Calu3 (cell line): ENCODE measurements at regions of chr13 and their contacts with region 1.

Region 1: DNA sequence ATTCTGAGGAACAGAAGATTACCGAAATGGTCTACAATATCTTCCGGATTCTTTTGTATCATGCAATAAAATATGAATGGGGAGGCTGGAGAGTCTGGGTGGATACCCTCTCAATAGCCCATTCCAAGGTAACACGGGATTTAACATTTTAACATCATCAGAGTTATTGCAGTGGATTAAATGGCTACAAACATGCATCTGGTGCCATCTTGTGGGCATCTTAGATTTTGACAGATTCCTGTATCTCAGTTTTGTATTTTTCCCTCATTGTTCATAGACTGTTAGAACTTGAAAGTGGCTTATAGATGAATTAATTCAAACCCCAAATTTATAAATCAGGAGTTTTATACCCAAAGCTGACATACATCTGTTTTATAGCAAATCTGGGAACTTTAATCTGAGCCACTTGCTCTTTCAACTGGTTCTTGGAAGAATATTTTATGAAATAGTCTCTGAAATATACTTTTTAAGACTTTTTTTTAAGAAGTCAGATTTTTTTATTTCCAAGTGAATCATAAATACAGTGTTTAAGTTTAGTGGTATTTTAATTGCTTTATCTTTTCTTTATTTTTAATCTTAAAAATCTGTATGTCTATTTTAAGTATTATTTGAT is 215.2 kb downstream of the NBEA start:
- DNase-seq: peak; percentile 30
- H3K4me3 Mint-ChIP-seq: peak overlapping the region; percentile 60
- H3K27ac Mint-ChIP-seq: peak overlapping the region; percentile 87
- H3K4me1 Mint-ChIP-seq: peaks cover 14% of the 10 kb centered on the region
- H3K27me3 Mint-ChIP-seq: no peaks in the 10 kb centered on the region
- CTCF ChIP-seq: peak; percentile 29

Region 2: DNA sequence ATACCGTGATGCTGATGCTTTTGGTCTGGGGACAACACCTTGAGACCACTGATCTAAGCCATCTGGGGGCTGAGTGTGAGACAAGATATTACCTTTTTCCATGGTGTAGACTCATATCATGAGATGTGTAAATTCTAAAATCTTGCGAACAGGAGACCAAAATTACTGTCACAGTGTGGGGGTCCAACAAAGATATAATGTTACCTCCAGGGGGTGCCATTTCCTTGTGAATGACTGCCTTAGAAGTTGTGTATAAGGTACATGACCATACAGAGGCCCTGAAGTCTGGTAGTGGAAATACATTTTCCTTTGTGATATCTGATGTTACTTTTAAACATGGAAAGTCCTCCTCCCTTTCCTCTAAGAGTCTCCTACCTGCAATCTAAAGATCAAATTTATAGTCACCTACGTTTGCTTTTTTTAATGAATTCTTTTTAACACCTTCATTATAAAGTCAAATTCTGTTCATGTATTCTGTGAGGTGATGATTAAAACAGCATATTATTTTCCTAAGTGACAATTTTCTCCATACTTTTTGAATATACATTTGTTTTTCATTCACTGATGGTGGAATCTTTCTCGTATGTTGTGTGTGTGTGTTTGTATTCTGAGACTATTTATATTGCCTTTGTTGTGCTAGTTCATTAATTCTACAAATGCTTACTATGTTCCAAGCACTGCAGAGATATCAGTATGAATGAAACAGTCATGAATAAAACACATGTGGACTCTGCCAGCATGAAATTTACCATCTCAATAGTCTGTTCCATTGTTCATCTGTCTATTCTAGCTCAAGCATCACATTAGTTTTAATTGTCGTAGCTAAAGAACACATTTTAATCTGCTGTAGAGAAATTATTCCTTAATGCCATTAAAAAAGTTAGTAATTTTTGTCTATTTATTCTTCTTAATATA is 1225.6 kb before region 1 on chr13:
- CTCF ChIA-PET with region 1: no interaction called
- intact Hi-C with region 1: loop called (anchors 2 kb)
- DNase-seq: peak; percentile 44
- H3K4me3 Mint-ChIP-seq: no peak overlapping the region
- H3K27ac Mint-ChIP-seq: no peak overlapping the region
- H3K4me1 Mint-ChIP-seq: peaks cover 8% of the 10 kb centered on the region
- H3K27me3 Mint-ChIP-seq: no peaks in the 10 kb centered on the region
- CTCF ChIP-seq: peak; percentile 33

Region 3: GRCh38 chr13:34167347-34167746 is 989.9 kb before region 1 on chr13:
- CTCF ChIA-PET with region 1: no interaction called
- intact Hi-C with region 1: loop called (anchors 5 kb)
- DNase-seq: no peak
- H3K4me3 Mint-ChIP-seq: no peak overlapping the region
- H3K27ac Mint-ChIP-seq: peak overlapping the region; percentile 45
- H3K4me1 Mint-ChIP-seq: peaks cover 51% of the 10 kb centered on the region
- H3K27me3 Mint-ChIP-seq: no peaks in the 10 kb centered on the region
- CTCF ChIP-seq: no peak

Region 4: GRCh38 chr13:34349091-34349722 is 808.0 kb before region 1 on chr13:
- CTCF ChIA-PET with region 1: no interaction called
- intact Hi-C with region 1: loop called (anchors 5 kb)
- DNase-seq: peak; percentile 22
- H3K4me3 Mint-ChIP-seq: no peak overlapping the region
- H3K27ac Mint-ChIP-seq: no peak overlapping the region
- H3K4me1 Mint-ChIP-seq: peaks cover 41% of the 10 kb centered on the region
- H3K27me3 Mint-ChIP-seq: no peaks in the 10 kb centered on the region
- CTCF ChIP-seq: no peak

Region 5: DNA sequence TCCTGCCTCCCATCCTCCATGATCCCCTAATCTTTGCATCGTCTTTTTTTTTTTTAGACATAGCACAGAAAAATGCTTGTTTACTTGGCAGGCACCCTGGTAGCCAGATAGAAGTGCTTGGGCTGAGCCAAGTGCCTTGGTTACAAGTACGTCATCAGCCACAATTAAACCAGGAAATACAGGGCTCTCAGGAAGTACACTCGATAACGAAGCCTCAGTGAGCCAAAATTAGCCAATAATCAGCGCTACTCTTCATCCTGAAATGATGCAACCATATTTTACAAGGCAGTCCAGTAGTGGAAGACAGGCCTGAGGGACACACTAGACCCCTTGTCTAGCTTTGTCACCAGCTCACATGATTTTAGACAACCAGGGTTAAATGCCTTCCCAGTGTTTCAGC is 409.2 kb before region 1 on chr13:
- CTCF ChIA-PET with region 1: no interaction called
- intact Hi-C with region 1: loop called (anchors 10 kb)
- DNase-seq: peak; percentile 52
- H3K4me3 Mint-ChIP-seq: no peak overlapping the region
- H3K27ac Mint-ChIP-seq: peak overlapping the region; percentile 94
- H3K4me1 Mint-ChIP-seq: no peaks in the 10 kb centered on the region
- H3K27me3 Mint-ChIP-seq: no peaks in the 10 kb centered on the region
- CTCF ChIP-seq: no peak

Region 6: GRCh38 chr13:34941835-34942731 is 215.2 kb before region 1 on chr13 and contains the start of gene NBEA:
- CTCF ChIA-PET with region 1: no interaction called
- intact Hi-C with region 1: loop called (anchors 2 kb)
- DNase-seq: peak; percentile 91
- H3K4me3 Mint-ChIP-seq: peak within 1 kb of the TSS; percentile 68
- H3K27ac Mint-ChIP-seq: peak within 1 kb of the TSS; percentile 84
- H3K4me1 Mint-ChIP-seq: no peaks in the 10 kb centered on the region
- H3K27me3 Mint-ChIP-seq: no peaks in the 10 kb centered on the region
- CTCF ChIP-seq: no peak
- total RNA-seq, gene NBEA: 18.0 and 21.4 TPM in 2 replicates